Stomach (tissue), 19 donors: ENCODE measurements at regions of chr5 and their contacts with region 1.

Region 1: GRCh38 chr5:115309751-115310370 is 13.4 kb upstream of the CCDC112 start:
- DNase-seq: peak in 1 of 2 donors; percentile 63
- H3K4me3 ChIP-seq: no peak overlapping the region
- H3K27ac ChIP-seq: no peak overlapping the region
- H3K4me1 ChIP-seq: no peaks in the 10 kb centered on the region
- H3K27me3 ChIP-seq: no peaks in the 10 kb centered on the region
- CTCF ChIP-seq: peak in 5 of 7 experiments; percentile 38 to 69 (median 66)
- EP300 ChIP-seq: no peak
- POLR2A ChIP-seq: no peak

Region 2: GRCh38 chr5:114969490-114969889 is 340.4 kb before region 1 on chr5:
- intact Hi-C with region 1: no loop called
- DNase-seq: no peak
- H3K4me3 ChIP-seq: no peak overlapping the region
- H3K27ac ChIP-seq: no peak overlapping the region
- H3K4me1 ChIP-seq: no peaks in the 10 kb centered on the region
- H3K27me3 ChIP-seq: no peaks in the 10 kb centered on the region
- CTCF ChIP-seq: no peak
- EP300 ChIP-seq: no peak
- POLR2A ChIP-seq: no peak

Region 3: DNA sequence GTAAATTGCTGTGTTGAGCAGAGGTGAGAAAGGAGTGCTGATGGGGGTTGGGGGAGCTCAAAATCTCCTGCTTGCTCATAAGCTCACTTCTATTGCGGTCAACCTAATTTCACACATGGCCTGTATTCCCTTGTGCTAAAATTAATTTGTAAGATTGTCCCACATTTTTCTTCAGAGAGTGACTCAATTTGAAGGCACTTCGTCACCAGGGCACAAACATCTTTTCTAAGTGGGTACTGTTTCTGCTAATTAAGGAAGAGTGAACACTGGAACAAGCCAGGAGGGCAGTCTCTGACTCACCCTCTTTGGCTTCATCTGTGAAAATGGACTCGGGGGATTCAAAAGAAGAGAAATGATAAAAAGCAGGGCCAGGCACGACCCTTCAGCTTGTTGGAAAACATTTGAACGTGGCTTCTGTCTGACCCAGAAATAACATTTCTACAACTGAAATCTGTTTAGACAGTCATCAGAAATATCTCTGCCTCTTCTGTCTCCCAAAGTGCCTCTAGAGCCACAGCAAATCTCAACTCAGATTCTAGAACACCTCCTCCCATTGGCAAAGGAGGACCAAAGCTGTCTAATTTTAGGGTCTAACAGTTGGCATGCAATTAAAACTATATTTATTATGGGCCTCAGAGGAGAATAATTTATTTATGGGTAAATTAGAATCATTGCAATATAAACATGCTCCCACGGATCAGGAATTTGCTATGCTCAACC is 184.9 kb after region 1 on chr5:
- intact Hi-C with region 1: no loop called
- DNase-seq: no peak
- H3K4me3 ChIP-seq: no peak overlapping the region
- H3K27ac ChIP-seq: peak overlapping the region in 1 of 5 donors; percentile 13
- H3K4me1 ChIP-seq: no peaks in the 10 kb centered on the region
- H3K27me3 ChIP-seq: no peaks in the 10 kb centered on the region
- CTCF ChIP-seq: no peak
- EP300 ChIP-seq: no peak
- POLR2A ChIP-seq: no peak

Region 4: DNA sequence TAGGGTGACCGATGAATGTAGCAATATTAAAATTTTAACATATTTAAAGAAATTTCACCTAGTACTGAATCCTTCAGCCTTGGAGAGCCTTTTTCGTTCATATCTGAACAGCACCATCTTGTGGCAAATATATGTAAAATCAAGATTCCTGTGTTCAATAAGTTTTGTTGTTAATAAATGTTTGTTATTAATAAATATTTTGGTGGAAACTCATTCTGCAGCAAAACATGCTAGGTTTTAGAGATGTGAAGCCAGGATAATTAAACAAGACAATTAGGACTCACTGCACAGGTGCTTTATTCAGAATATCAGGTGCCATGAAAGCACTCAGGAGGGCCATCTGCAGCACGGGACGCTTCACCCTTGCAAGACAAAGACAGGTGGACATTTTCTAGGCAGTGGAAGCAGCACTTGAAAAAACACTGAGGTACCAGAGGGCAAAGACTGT is 276.8 kb after region 1 on chr5:
- intact Hi-C with region 1: loop called (anchors 5 kb)
- DNase-seq: peak in 1 of 2 donors; percentile 48
- H3K4me3 ChIP-seq: no peak overlapping the region
- H3K27ac ChIP-seq: no peak overlapping the region
- H3K4me1 ChIP-seq: peaks cover 0 to 22% (median 8%) of the 10 kb centered on the region in 4 donors
- H3K27me3 ChIP-seq: no peaks in the 10 kb centered on the region
- CTCF ChIP-seq: peak in 4 of 7 experiments; percentile 23 to 62 (median 48)
- EP300 ChIP-seq: no peak
- POLR2A ChIP-seq: no peak